ENCODE measurements at regions of chr17 and their contacts with region 1.

Region 1: GRCh38 chr17:38982858-38983746 is 15.9 kb upstream of the FBXO47 start:
- DNase-seq: peak; percentile 61 to 63
- H3K4me3 ChIP-seq: no peak overlapping the region
- H3K4me3 Mint-ChIP-seq: no peak overlapping the region
- H3K27ac Mint-ChIP-seq: no peak overlapping the region
- H3K4me1 ChIP-seq: no peaks in the 10 kb centered on the region
- H3K4me1 Mint-ChIP-seq: no peaks in the 10 kb centered on the region
- H3K27me3 ChIP-seq: no peaks in the 10 kb centered on the region
- H3K27me3 Mint-ChIP-seq: peaks cover 2% of the 10 kb centered on the region
- CTCF ChIP-seq: peak; percentile 66 to 73

Region 2: DNA sequence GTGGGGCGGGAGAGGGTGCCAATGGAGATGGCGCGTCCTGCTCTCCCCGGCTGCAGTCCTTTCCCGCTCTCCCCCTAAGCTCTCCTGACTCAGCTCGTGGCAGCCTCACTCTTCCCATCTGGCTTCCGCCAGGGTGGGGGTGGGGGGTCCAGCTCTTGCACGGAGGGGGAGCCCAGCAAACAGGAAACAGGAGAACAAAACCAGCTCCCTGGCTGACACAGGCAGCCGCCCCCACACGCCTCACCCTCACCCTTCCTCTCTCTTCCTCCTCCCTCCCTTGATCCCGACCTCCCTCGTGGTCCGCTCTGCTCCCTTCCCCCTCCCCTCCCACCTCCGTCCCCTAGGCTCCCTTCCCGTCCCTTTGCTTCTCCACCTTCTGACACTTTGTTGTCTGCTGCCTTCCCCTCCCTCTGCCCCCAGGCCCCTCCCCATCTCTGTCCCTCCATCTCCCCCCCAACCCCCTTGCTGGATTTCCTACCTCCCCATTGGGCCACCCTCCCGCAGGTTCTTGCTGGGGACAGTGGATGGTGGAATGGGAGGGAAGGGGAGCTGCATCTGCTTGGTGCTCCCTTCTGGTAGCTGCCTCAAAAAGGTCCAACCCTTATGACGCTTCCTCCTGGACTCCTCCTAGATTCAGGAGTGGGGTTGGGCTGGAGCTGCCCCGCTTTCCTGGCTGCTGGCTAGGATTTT is 531.1 kb before region 1 on chr17:
- CTCF ChIA-PET with region 1: interaction called, 10 read pairs
- POLR2A ChIA-PET with region 1: no interaction called
- intact Hi-C with region 1: no loop called
- DNase-seq: peak in 1 of 2 experiments; percentile 81
- H3K4me3 ChIP-seq: peak overlapping the region; percentile 2; the same call in 1 of the 2 replicates
- H3K4me3 Mint-ChIP-seq: peak overlapping the region; percentile 94
- H3K27ac Mint-ChIP-seq: peak overlapping the region; percentile 97
- H3K4me1 ChIP-seq: peaks cover 75% of the 10 kb centered on the region
- H3K4me1 Mint-ChIP-seq: peaks cover 46% of the 10 kb centered on the region
- H3K27me3 ChIP-seq: no peaks in the 10 kb centered on the region
- H3K27me3 Mint-ChIP-seq: peaks cover 8% of the 10 kb centered on the region
- CTCF ChIP-seq: no peak

Region 3: DNA sequence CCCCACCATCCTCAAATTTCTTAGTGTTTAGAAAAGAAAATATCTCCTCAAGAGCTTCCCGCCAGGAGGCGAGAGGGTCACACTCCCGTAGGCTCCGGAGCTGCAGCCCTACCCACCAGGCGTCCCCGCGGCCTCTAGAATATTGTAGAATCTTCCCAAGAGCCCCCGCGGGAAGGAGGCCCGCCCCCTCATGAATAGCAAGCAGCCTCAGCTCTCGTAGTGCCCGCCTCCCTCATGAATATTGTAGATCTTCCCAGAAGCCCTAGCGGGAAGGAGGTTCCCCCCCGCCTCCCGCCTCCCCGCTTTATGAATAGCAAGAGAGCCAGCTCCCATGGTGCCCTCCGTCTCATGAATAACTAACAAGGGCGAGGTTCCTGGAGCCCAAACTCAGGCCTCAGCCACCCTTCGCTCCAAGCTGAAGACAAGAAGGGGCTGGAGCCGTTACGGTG is 15.8 kb before region 1 on chr17 and contains the start of gene FBXO47:
- CTCF ChIA-PET with region 1: interaction called, 21 read pairs
- POLR2A ChIA-PET with region 1: interaction called, 3 read pairs
- intact Hi-C with region 1: no loop called
- DNase-seq: peak; percentile 95 to 98
- H3K4me3 ChIP-seq: peak within 1 kb of the TSS; percentile 46
- H3K4me3 Mint-ChIP-seq: peak within 1 kb of the TSS; percentile 80
- H3K27ac Mint-ChIP-seq: peak within 1 kb of the TSS; percentile 84
- H3K4me1 ChIP-seq: no peaks in the 10 kb centered on the region
- H3K4me1 Mint-ChIP-seq: peaks cover 5% of the 10 kb centered on the region
- H3K27me3 ChIP-seq: no peaks in the 10 kb centered on the region
- H3K27me3 Mint-ChIP-seq: no peaks in the 10 kb centered on the region
- CTCF ChIP-seq: peak in 1 of 2 experiments; percentile 53
- total RNA-seq, gene FBXO47: not detected in 2 replicates

Region 4: DNA sequence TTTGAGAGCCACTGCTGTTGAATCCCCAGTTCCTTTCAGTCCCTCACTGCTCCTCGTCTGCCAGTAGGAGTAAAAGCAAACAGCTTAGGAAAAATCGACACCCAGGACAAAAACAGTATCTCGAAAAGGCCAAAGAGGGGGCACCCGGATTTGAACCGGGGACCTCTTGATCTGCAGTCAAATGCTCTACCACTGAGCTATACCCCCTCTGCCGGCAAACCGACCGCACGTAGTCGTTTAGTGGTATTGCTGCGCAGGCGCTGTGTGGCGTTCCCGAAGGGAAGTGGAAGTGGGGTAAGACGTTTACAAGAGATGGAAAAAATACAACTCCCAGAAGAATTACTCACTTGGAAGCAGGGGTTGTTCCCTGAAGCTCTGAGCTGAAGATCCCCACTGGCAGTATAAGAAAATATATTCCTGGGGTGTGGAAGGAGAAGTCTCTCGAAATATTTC is 170.5 kb after region 1 on chr17:
- CTCF ChIA-PET with region 1: interaction called, 162 read pairs
- POLR2A ChIA-PET with region 1: interaction called, 15 read pairs
- intact Hi-C with region 1: loop called (anchors 1 kb)
- DNase-seq: peak; percentile 90 to 94
- H3K4me3 ChIP-seq: peak overlapping the region; percentile 83
- H3K4me3 Mint-ChIP-seq: peak overlapping the region; percentile 94
- H3K27ac Mint-ChIP-seq: peak overlapping the region; percentile 96
- H3K4me1 ChIP-seq: peaks cover 4% of the 10 kb centered on the region
- H3K4me1 Mint-ChIP-seq: peaks cover 36% of the 10 kb centered on the region
- H3K27me3 ChIP-seq: peaks cover 5% of the 10 kb centered on the region; the same call in 1 of the 2 replicates
- H3K27me3 Mint-ChIP-seq: peaks cover 10% of the 10 kb centered on the region
- CTCF ChIP-seq: peak; percentile 8 to 10

Region 5: GRCh38 chr17:39174907-39175694 is 192.0 kb after region 1 on chr17:
- CTCF ChIA-PET with region 1: interaction called, 32 read pairs
- POLR2A ChIA-PET with region 1: no interaction called
- intact Hi-C with region 1: no loop called
- DNase-seq: peak; percentile 66 to 71
- H3K4me3 ChIP-seq: no peak overlapping the region
- H3K4me3 Mint-ChIP-seq: no peak overlapping the region
- H3K27ac Mint-ChIP-seq: no peak overlapping the region
- H3K4me1 ChIP-seq: no peaks in the 10 kb centered on the region
- H3K4me1 Mint-ChIP-seq: no peaks in the 10 kb centered on the region
- H3K27me3 ChIP-seq: no peaks in the 10 kb centered on the region
- H3K27me3 Mint-ChIP-seq: no peaks in the 10 kb centered on the region
- CTCF ChIP-seq: peak; percentile 68 to 70

Region 6: DNA sequence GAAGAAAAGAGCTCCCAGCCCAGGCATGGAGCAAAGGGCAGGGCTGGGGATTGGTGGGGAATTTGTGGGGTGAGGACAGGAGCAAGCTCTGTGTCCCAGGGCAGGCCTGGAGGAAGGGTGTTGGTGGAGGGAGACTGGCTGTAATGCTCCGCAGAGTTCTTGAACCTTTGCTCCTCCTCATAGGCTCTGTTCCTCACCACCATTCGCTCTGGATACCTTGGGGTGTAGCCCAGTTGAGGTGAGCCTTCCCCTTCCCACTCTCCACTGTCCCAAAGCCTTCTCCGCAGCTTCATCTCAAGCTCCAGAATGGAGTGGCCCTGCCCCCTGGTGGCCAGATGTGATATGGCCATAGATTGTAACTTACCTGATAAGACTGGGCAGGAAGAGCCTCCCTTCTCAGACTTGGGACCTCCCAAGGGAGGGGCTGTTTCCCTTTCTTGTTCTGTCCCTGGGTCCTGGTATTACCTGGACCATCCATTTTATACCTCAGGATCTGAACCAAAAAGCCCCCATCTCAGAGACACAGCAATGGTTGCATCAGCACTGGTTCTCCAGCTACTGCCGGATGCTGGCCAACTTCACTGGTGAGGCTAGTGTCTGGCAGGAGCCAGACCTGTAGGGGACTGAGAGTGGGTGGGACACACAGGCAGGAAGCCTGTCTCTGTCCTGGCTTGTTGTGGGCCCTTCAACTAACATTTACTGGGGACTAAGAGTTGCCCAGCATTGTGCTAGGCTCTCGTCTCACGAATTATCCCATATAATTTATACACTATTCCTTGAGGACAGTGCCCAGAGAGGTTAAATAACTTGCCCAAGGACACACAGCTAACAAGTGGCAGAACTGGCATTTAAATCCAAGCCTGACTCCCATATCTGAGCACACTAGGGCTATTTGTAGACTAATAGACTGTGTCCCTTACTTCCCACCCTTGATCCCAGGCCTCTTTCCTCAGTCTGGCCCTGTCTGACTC is 261.8 kb after region 1 on chr17:
- CTCF ChIA-PET with region 1: interaction called, 19 read pairs
- POLR2A ChIA-PET with region 1: no interaction called
- intact Hi-C with region 1: loop called (anchors 1 kb)
- DNase-seq: peak; percentile 86 to 92
- H3K4me3 ChIP-seq: no peak overlapping the region
- H3K4me3 Mint-ChIP-seq: no peak overlapping the region
- H3K27ac Mint-ChIP-seq: no peak overlapping the region
- H3K4me1 ChIP-seq: no peaks in the 10 kb centered on the region
- H3K4me1 Mint-ChIP-seq: no peaks in the 10 kb centered on the region
- H3K27me3 ChIP-seq: no peaks in the 10 kb centered on the region
- H3K27me3 Mint-ChIP-seq: no peaks in the 10 kb centered on the region
- CTCF ChIP-seq: peak; percentile 94 to 96

Region 7: GRCh38 chr17:39385040-39385439 is 401.9 kb after region 1 on chr17:
- CTCF ChIA-PET with region 1: no interaction called
- POLR2A ChIA-PET with region 1: no interaction called
- intact Hi-C with region 1: no loop called
- DNase-seq: no peak
- H3K4me3 ChIP-seq: no peak overlapping the region
- H3K4me3 Mint-ChIP-seq: no peak overlapping the region
- H3K27ac Mint-ChIP-seq: no peak overlapping the region
- H3K4me1 ChIP-seq: no peaks in the 10 kb centered on the region
- H3K4me1 Mint-ChIP-seq: no peaks in the 10 kb centered on the region
- H3K27me3 ChIP-seq: no peaks in the 10 kb centered on the region
- H3K27me3 Mint-ChIP-seq: no peaks in the 10 kb centered on the region
- CTCF ChIP-seq: no peak